ENCODE measurements at regions of chr19 and their contacts with region 1.

Region 1: GRCh38 chr19:3471954-3472655 is 8.2 kb downstream of the SMIM24 start:
- DNase-seq: no peak
- ATAC-seq: peak; percentile 54 to 60

Region 2: GRCh38 chr19:3224346-3225168 is 247.5 kb before region 1 on chr19 and contains the start of gene CELF5:
- intact Hi-C with region 1: loop called in 1 of 2 experiments (anchors 10 kb)
- DNase-seq: peak; percentile 61
- ATAC-seq: peak; percentile 72 to 81
- total RNA-seq, gene CELF5: 0.16 TPM in 1 of 2 donors, not detected in the other

Region 3: DNA sequence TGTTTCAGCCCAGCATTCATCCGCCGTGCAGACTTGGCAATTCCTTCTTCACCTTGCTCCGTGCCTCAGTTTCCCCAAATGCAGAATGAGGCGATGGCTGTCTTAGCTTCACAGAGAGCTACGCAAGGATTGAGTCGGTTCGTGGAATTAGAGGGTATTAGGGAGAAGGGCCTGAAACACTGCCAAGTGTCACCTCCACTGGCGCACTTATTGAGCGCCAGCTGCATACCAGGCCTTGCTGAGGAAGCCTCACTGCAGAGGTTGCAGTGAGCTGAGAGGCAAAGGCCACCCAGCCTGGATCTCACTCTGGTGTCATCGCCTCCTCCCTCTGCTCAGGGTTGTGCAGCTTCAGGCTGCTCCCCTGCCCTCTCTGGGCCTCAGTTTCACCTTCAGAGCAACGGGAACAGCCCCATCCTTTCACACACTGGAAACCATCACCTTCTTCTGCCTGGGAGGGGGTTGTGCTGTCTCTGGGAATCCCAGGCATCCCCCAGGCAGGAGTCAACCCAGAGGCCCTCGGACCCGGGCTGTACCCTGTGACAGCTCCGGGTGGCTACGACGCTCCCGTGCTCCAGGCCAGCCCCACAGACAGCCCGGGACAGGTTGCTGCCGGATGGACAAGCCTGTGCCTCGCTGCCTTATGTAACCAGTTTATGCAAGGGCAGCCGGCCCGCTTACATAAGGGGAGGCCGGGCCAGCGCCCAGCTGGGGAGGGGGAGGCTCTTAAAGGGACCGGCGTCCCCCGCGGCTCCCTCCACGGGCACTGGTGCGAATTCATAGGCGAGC is 73.8 kb before region 1 on chr19:
- intact Hi-C with region 1: no loop called
- DNase-seq: peak; percentile 80
- ATAC-seq: peak; percentile 67 to 90

Region 4: DNA sequence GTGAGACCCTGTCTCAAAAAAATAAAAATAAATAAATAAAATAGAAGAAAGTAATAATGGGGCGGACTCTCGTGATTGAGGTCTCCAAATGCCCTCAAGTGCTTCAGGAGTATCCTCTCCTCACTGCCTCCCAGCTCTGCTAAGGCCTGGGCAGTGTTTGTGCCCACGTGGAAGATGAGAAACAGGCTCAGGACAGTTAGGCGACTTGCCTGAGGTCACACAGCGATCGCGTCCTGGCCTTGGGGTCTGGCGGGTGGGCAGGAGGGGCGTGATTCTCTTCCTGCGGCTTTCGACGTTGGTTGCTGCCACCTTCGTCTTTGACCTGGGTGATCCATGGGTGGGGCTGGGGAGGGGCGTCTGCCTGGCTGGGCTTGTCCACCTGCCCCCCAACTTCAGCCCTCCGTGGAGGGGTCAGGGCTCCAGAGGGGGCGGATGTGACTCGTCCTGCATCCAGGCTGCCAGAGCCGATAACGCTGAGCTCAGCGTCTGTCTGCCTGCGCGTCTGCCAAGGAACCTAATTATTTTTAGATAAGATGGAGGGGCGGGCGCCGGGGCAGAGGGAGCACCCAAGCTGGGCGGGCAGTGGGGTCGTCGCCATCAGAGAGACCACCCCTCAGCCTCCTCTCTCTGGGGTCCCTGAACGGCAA is 48.8 kb before region 1 on chr19:
- intact Hi-C with region 1: no loop called
- DNase-seq: peak; percentile 73
- ATAC-seq: peak; percentile 43 to 48

Measured in left cardiac atrium (tissue), 4 donors.